Dendritic cell treated with granulocyte-macrophage colony-stimulating factor and Interleukin-4, amounts not matched to agents 40 ng/mL and 50 ng/mL, for 4 days (primary cell): ENCODE measurements at regions of chr9 and their contacts with region 1.

Region 1: DNA sequence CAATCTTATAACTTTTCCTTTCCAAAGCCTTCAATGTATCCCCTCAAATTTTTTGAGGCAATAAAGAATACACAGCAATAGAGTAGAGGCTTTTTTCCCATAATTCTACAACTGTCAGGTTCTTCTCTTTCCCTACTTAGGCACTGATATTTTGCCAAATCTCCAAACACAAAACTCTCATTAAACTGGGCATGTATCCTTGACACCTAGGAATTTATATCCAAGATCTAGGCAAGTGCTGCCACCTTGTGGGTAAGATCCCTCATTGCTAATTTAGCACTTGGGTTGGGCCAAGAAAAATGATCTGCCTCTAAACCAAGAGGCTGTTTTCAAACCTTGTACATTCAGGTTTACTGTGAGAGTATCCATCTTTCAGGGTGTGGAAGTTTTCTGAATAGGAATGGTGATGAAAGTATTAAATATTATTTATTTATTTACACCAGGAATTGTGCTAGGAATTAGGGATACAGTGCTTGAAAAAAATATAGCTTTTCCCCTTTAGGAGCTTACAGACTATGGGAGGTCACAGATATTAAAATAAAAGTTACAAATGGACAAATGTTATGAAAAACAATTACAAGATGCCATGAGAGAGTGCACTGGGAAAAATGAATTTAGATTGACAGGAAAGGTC is 17.6 kb downstream of the TSTD2 start:
- H3K4me3 Mint-ChIP-seq: no peak overlapping the region
- H3K27ac Mint-ChIP-seq: no peak overlapping the region
- H3K4me1 Mint-ChIP-seq: peaks cover 22% of the 10 kb centered on the region
- H3K27me3 Mint-ChIP-seq: no peaks in the 10 kb centered on the region

Region 2: GRCh38 chr9:97411789-97412625 is 203.5 kb before region 1 on chr9 and contains the start of gene TDRD7:
- intact Hi-C with region 1: loop called (anchors 5 kb)
- H3K4me3 Mint-ChIP-seq: peak within 1 kb of the TSS; percentile 87
- H3K27ac Mint-ChIP-seq: peak within 1 kb of the TSS; percentile 82
- H3K4me1 Mint-ChIP-seq: peaks cover 49% of the 10 kb centered on the region
- H3K27me3 Mint-ChIP-seq: no peaks in the 10 kb centered on the region

Region 3: DNA sequence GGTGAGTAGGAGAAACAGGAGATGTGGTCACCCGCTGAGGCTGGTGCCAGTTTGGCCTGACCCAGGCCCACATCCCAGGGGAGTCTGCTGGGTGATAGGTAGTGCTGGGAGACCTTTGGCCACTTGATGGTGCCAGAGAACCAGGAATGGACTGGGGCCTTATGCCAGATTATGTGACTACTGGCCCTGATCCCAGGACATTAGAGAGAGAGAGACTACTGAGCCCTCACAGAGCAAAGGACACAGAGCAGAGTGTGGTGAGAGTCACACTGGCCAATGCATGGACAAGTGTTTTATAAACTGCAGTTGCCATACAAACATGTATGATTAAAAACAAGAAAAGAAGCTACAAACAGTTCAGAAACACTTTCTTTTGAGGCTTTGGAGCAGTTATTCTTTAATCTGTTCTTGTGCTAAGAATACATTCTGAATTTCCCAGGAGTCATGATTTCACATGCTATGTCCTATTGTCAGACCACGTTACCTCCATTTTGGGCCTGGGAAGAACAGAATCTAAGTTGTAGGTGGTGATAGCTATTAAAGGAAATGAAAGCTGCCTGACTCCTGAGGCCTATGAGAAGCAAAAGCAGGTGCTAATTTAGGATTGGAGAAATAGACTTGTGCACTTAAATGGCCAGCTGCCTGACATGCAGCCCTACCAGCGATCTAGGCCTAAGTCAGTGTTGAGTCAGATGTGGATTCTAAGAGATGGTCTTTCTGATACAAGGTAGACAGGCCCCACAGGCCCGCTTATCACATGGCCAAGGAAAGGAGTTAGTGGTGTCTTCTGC is 146.7 kb before region 1 on chr9:
- intact Hi-C with region 1: loop called (anchors 1 kb)
- H3K4me3 Mint-ChIP-seq: no peak overlapping the region
- H3K27ac Mint-ChIP-seq: no peak overlapping the region
- H3K4me1 Mint-ChIP-seq: peaks cover 4% of the 10 kb centered on the region
- H3K27me3 Mint-ChIP-seq: no peaks in the 10 kb centered on the region

Region 4: DNA sequence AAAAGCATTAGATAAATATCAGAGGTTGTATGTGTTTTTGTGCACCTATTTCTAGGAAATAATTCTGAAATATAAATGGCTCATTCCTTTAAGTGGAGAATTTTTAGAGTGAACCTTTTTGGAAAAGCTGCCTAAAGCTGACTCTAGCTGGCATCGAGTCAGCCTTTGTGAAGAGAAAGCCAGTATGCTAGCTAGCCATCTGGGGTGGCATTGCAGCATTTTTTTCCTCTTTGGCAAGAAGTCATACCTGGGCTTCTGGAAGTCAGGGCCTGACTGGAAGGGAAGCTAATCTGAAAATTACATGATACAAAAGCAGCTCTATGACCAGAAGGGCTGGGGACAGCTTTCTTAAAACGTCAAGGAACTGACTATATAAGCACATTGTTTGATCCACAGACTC is 387.3 kb after region 1 on chr9:
- intact Hi-C with region 1: no loop called
- H3K4me3 Mint-ChIP-seq: no peak overlapping the region
- H3K27ac Mint-ChIP-seq: no peak overlapping the region
- H3K4me1 Mint-ChIP-seq: peaks cover under 1% of the 10 kb centered on the region
- H3K27me3 Mint-ChIP-seq: no peaks in the 10 kb centered on the region